ENCODE measurements at regions of chr19 and their contacts with region 1.

Region 1: GRCh38 chr19:4352701-4353121 is 9.3 kb downstream of the MPND start:
- DNase-seq: peak; percentile 72 to 74 (median 73)
- ATAC-seq: peak; percentile 87
- H3K4me3 ChIP-seq: no peak overlapping the region
- H3K27ac ChIP-seq: no peak overlapping the region
- H3K4me1 ChIP-seq: peaks cover 0 to 29% of the 10 kb centered on the region in 2 experiments; a peak in 2 of 5 replicates
- H3K27me3 ChIP-seq: no peaks in the 10 kb centered on the region
- CTCF ChIP-seq: peak; percentile 85 to 86 (median 85)
- EP300 ChIP-seq: no peak
- POLR2A ChIP-seq: no peak
- RAD21 ChIP-seq: peak; percentile 59 to 65

Region 2: DNA sequence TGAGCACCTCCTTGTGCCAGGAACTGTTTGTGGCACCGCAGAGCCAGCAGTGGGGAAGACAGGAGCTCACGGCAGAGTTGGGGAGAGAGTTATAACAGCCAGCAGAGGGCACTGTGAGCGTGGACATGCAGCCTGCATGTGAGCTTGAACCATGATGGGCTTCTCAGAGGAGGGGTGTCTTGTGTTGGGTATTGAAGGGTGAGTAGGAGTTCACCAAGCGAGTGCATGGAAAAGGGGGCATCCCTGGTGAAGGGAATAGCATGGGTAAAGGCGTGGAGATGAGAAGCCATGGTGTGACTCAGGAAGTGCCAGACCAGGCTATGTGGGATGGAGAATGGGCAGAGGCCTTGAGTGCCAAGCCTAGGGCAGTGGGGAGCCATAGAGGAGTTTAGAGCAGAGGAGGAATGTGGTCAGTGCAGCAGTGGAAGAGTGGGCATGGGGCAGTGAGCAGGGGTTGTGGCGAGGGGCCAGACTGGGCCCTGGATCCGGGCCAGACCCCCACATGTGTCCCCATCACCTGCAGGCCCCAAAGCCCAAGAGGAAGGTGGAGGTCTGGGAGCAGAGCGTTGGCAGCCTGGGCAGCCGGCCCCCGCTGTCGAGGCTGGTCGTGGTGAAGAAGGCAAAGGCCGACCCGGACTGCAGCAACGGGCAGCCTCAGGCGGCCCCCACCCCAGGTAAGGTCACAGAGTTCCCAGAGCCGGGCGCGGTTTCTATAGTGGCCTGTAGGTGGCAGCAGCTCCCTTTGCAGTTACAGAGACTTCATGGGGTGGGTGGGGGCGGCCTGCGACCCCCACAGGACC is 85.4 kb before region 1 on chr19:
- CTCF ChIA-PET with region 1: interaction called, 14 read pairs
- POLR2A ChIA-PET with region 1: interaction called, 6 read pairs
- in situ Hi-C with region 1: loop called (anchors 10 kb)
- intact Hi-C with region 1: loop called (anchors 2 kb)
- DNase-seq: peak; percentile 80 to 88 (median 83)
- ATAC-seq: peak; percentile 98
- H3K4me3 ChIP-seq: no peak overlapping the region
- H3K27ac ChIP-seq: no peak overlapping the region
- H3K4me1 ChIP-seq: peaks cover 0 to 13% of the 10 kb centered on the region in 2 experiments; a peak in 2 of 5 replicates
- H3K27me3 ChIP-seq: no peaks in the 10 kb centered on the region
- CTCF ChIP-seq: peak; percentile 88 to 93 (median 91)
- EP300 ChIP-seq: no peak
- POLR2A ChIP-seq: peak; percentile 37; the same call in 1 of the 2 replicates
- RAD21 ChIP-seq: peak; percentile 68 to 88

Region 3: GRCh38 chr19:4368128-4368820 is 15.6 kb after region 1 on chr19:
- CTCF ChIA-PET with region 1: no interaction called
- POLR2A ChIA-PET with region 1: interaction called, 18 read pairs
- in situ Hi-C with region 1: no loop called
- intact Hi-C with region 1: no loop called
- DNase-seq: no peak
- ATAC-seq: no peak
- H3K4me3 ChIP-seq: no peak overlapping the region
- H3K27ac ChIP-seq: peak overlapping the region; percentile 39; the same call in 2 of the 3 replicates
- H3K4me1 ChIP-seq: peaks cover 38 to 84% of the 10 kb centered on the region in 2 experiments
- H3K27me3 ChIP-seq: no peaks in the 10 kb centered on the region
- CTCF ChIP-seq: no peak
- EP300 ChIP-seq: no peak
- POLR2A ChIP-seq: no peak
- RAD21 ChIP-seq: no peak

Region 4: DNA sequence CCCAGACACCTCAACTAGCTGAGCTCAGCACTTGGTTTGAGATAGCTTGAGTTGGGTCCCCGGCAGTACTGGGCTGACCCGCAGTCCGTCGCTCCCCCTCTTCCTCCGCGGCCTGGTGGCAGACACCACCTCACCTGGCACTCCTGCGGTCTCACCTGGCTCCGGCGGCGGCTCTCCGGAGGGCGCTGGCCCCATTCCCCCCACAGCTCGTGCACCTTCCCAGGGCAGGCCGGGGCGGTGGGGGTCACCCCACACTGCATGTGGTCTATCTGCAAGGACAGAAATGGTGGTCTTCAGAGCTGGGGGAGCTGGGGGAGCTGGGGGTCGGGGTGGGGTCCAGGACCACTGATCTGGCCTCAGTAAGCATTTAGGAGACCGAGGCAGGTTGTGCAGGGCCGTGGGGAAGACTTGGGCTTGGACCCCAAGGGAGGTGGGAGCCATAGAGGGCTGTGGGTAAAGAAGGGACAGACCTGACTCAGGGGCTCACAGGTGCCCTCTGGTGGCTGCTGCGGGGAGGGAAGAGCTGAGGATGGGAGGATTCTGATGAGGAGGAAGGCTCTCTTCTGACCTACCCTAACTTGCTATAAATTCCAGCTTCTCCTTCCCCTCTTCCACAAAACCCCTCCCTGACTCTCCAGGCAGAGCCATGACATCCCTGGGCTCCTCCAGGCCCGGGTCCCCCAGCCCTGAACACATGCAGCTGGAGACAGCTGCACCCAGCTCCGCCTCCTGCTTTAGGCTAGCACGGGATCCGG is 172.3 kb after region 1 on chr19:
- CTCF ChIA-PET with region 1: no interaction called
- POLR2A ChIA-PET with region 1: no interaction called
- in situ Hi-C with region 1: no loop called
- intact Hi-C with region 1: no loop called
- DNase-seq: peak; percentile 65 to 77 (median 74)
- ATAC-seq: peak; percentile 90
- H3K4me3 ChIP-seq: no peak overlapping the region
- H3K27ac ChIP-seq: no peak overlapping the region
- H3K4me1 ChIP-seq: peaks cover 0 to 37% of the 10 kb centered on the region in 2 experiments; a peak in 4 of 5 replicates
- H3K27me3 ChIP-seq: no peaks in the 10 kb centered on the region; a peak in 1 of 5 replicates
- CTCF ChIP-seq: peak; percentile 86 to 90 (median 88)
- EP300 ChIP-seq: no peak
- POLR2A ChIP-seq: no peak
- RAD21 ChIP-seq: peak; percentile 20 to 58; a peak in 3 of 4 replicates

Measured in K562 (cell line).